ENCODE measurements at regions of chr7 and their contacts with region 1.

Region 1: DNA sequence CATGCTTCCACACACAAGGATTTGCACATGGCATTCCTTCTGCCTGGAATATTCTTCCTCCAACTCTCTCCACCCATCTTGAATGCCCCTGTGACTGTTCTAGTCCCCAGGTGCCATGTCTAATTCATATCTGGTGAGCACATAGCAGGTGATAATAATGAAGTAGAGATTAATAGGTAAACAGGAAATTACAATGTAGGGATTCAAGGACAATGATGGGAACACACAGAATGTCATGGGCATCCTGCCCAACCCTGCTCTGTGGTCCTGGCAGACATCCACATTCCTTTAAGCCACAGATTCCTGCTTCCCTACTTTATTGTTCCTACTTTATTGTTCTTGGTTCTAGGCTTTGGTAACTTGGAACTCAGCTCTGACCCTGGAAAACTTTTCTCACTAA is 115.8 kb downstream of the THSD7A start:
- DNase-seq: peak; percentile 98
- H3K4me3 ChIP-seq: no peak overlapping the region
- H3K27ac ChIP-seq: peak overlapping the region; percentile 89
- H3K4me1 ChIP-seq: peaks cover 42% of the 10 kb centered on the region
- H3K27me3 ChIP-seq: no peaks in the 10 kb centered on the region
- CTCF ChIP-seq: no peak
- POLR2A ChIP-seq: no peak

Region 2: GRCh38 chr7:11450281-11450680 is 265.9 kb before region 1 on chr7:
- CTCF ChIA-PET with region 1: no interaction called
- POLR2A ChIA-PET with region 1: no interaction called
- dilution Hi-C with region 1: no loop called
- intact Hi-C with region 1: loop called (anchors 2 kb)
- DNase-seq: peak; percentile 90
- H3K4me3 ChIP-seq: no peak overlapping the region
- H3K27ac ChIP-seq: peak overlapping the region; percentile 59
- H3K4me1 ChIP-seq: peaks cover 22% of the 10 kb centered on the region
- H3K27me3 ChIP-seq: no peaks in the 10 kb centered on the region
- CTCF ChIP-seq: no peak
- POLR2A ChIP-seq: no peak

Region 3: DNA sequence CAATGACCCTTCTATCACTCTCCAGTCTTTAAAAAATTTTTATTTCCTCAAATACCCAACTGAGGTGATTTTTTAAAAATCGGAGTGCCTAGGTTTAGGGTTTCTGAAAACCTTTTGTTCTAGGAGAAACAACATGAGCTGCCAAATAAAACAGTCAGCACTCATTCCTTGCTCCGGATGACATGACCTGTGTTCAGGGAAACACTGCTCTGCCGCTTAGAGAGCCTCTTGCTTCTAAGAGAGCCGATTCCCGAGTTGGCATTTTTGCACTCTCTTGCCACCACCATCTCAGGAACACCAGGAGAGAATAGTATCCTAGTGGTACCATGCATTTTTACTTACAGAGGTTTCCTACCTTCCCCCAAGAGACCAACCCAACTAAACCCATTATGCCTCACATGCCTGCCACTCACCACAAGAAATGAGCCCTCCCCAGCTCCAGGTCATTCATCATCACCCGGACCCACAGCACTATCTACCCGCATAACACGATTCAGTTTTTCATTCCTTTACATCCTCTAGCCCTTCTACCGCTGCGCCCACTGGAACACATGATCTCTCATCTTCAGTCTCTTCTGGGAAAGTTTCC is 249.6 kb before region 1 on chr7:
- CTCF ChIA-PET with region 1: no interaction called
- POLR2A ChIA-PET with region 1: no interaction called
- dilution Hi-C with region 1: no loop called
- intact Hi-C with region 1: no loop called
- DNase-seq: peak; percentile 80
- H3K4me3 ChIP-seq: no peak overlapping the region
- H3K27ac ChIP-seq: no peak overlapping the region
- H3K4me1 ChIP-seq: peaks cover 11% of the 10 kb centered on the region
- H3K27me3 ChIP-seq: no peaks in the 10 kb centered on the region
- CTCF ChIP-seq: no peak
- POLR2A ChIP-seq: no peak

Region 4: GRCh38 chr7:11592699-11593098 is 123.5 kb before region 1 on chr7:
- CTCF ChIA-PET with region 1: no interaction called
- POLR2A ChIA-PET with region 1: no interaction called
- dilution Hi-C with region 1: no loop called
- intact Hi-C with region 1: loop called (anchors 1 kb)
- DNase-seq: peak; percentile 58
- H3K4me3 ChIP-seq: no peak overlapping the region
- H3K27ac ChIP-seq: no peak overlapping the region
- H3K4me1 ChIP-seq: peaks cover 21% of the 10 kb centered on the region
- H3K27me3 ChIP-seq: no peaks in the 10 kb centered on the region
- CTCF ChIP-seq: no peak
- POLR2A ChIP-seq: no peak

Region 5: GRCh38 chr7:11625669-11626068 is 90.5 kb before region 1 on chr7:
- CTCF ChIA-PET with region 1: no interaction called
- POLR2A ChIA-PET with region 1: no interaction called
- dilution Hi-C with region 1: no loop called
- intact Hi-C with region 1: loop called (anchors 1 kb)
- DNase-seq: peak; percentile 96
- H3K4me3 ChIP-seq: no peak overlapping the region
- H3K27ac ChIP-seq: peak overlapping the region; percentile 56
- H3K4me1 ChIP-seq: peaks cover 16% of the 10 kb centered on the region
- H3K27me3 ChIP-seq: no peaks in the 10 kb centered on the region
- CTCF ChIP-seq: no peak
- POLR2A ChIP-seq: no peak

Region 6: DNA sequence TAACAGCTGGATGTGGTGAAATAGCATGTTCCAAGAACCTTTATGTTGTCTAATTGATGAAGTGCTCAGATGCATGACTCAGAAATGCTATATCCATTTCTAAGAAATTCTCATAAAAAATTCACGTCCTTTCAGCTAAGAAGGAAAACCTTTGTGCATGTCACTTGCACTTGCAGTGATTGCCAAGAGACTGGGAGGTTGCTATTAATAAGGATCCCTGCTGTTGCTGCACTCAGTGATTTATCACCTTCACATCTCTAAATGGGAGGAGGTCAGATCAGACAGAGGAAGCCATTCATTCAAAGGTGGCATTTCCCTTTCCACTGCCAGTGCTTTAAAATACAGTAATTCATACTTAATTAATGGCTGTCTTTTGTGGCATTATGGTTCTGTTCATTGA is 26.3 kb after region 1 on chr7:
- CTCF ChIA-PET with region 1: no interaction called
- POLR2A ChIA-PET with region 1: no interaction called
- dilution Hi-C with region 1: no loop called
- intact Hi-C with region 1: loop called (anchors 2 kb)
- DNase-seq: peak; percentile 81
- H3K4me3 ChIP-seq: no peak overlapping the region
- H3K27ac ChIP-seq: no peak overlapping the region
- H3K4me1 ChIP-seq: no peaks in the 10 kb centered on the region
- H3K27me3 ChIP-seq: no peaks in the 10 kb centered on the region
- CTCF ChIP-seq: no peak
- POLR2A ChIP-seq: no peak